ENCODE measurements at regions of chr1 and their contacts with region 1.

Region 1: DNA sequence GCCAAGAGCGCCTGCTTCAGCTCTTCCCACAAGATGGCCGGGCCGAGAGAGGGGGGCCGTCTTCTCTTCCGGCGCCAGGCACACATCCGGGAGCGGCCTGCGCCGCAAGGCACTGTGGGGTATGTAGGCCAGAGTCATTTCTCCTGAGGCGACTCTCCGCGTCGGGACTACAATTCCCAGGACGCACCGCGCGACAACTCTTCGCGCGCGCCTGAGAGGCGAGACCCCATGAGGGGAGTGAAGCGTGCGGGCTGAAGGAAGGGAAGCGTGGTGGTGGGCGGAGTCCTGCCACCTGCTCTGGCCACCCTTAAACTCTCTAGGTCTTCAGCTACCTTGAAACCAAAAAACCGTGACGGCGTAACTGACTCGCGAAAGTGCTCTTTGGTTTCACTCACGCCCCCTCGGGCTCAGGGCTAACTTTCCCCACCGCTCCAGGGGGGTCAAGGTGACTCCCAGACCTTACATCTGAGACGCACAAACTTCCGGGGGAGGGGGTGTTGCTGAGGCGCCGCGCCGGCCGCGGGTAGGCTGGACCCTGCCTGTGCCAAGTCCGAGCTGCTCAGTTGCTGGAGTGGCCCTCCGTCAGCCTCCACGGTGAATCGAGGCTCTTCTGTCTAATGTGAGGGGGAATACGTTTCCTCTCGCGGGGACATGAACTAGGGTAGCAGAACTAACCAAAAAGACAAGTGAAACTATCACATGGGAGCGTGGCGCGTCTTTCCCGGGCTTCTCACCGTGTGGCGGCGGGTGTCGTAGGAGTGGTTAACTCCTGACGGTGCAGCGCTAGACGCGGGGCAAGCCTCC is at the start of gene SERBP1:
- DNase-seq: peak; percentile 98
- H3K4me3 Mint-ChIP-seq: peak within 1 kb of the TSS; percentile 100
- H3K27ac Mint-ChIP-seq: peak within 1 kb of the TSS; percentile 98
- H3K4me1 Mint-ChIP-seq: peaks cover 28% of the 10 kb centered on the region
- H3K27me3 Mint-ChIP-seq: no peaks in the 10 kb centered on the region
- CTCF ChIP-seq: no peak
- total RNA-seq, gene SERBP1: 233 and 315 TPM in 2 replicates

Region 2: GRCh38 chr1:67367370-67368045 is 63.0 kb before region 1 on chr1:
- CTCF ChIA-PET with region 1: interaction called, 3 read pairs
- POLR2A ChIA-PET with region 1: interaction called, 12 read pairs
- intact Hi-C with region 1: no loop called
- DNase-seq: peak; percentile 64
- H3K4me3 Mint-ChIP-seq: no peak overlapping the region
- H3K27ac Mint-ChIP-seq: no peak overlapping the region
- H3K4me1 Mint-ChIP-seq: peaks cover 16% of the 10 kb centered on the region
- H3K27me3 Mint-ChIP-seq: no peaks in the 10 kb centered on the region
- CTCF ChIP-seq: no peak

Region 3: DNA sequence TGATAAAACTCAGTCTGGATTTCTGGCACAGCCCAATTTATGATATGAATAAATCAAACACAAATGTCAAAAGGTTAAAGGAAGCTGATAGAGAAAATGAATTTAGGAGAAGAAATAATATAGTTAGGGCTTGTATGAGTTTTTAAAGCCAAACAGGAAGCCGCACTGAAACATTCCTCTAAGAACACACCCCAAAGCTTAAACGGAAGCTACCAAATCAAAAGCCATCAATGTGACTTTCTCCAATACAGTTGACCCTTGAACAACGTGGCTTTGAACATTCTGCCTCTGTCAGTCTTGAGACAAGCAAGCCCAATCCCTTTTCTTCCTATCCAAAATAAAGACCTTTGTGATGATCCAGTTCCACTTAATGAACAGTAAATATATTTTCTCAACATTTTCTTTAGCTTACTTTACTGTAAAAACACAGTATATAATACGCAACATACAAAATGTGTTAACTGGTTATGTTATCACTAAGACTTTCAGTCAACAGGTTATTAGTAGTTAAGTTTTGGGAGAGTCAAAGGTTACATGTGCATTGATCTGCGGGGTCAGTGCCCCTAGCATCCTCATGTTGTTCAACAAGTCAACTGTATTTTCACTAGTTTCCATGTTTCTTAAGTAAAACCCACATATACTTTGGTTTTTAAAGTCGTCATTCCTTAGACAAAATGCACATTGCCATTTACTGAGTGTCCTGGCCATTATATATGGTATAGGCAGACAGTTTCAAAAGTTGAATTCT is 11.5 kb before region 1 on chr1:
- CTCF ChIA-PET with region 1: interaction called, 8 read pairs
- POLR2A ChIA-PET with region 1: interaction called, 25 read pairs
- intact Hi-C with region 1: no loop called
- DNase-seq: no peak
- H3K4me3 Mint-ChIP-seq: no peak overlapping the region
- H3K27ac Mint-ChIP-seq: no peak overlapping the region
- H3K4me1 Mint-ChIP-seq: peaks cover 13% of the 10 kb centered on the region
- H3K27me3 Mint-ChIP-seq: no peaks in the 10 kb centered on the region
- CTCF ChIP-seq: no peak

Region 4: GRCh38 chr1:67535474-67535873 is 104.9 kb after region 1 on chr1:
- CTCF ChIA-PET with region 1: no interaction called
- POLR2A ChIA-PET with region 1: no interaction called
- intact Hi-C with region 1: no loop called
- DNase-seq: peak; percentile 85
- H3K4me3 Mint-ChIP-seq: no peak overlapping the region
- H3K27ac Mint-ChIP-seq: peak overlapping the region; percentile 12
- H3K4me1 Mint-ChIP-seq: peaks cover 6% of the 10 kb centered on the region
- H3K27me3 Mint-ChIP-seq: no peaks in the 10 kb centered on the region
- CTCF ChIP-seq: peak; percentile 95

Region 5: GRCh38 chr1:68051475-68051874 is 620.9 kb after region 1 on chr1:
- CTCF ChIA-PET with region 1: no interaction called
- POLR2A ChIA-PET with region 1: no interaction called
- intact Hi-C with region 1: no loop called
- DNase-seq: no peak
- H3K4me3 Mint-ChIP-seq: no peak overlapping the region
- H3K27ac Mint-ChIP-seq: no peak overlapping the region
- H3K4me1 Mint-ChIP-seq: no peaks in the 10 kb centered on the region
- H3K27me3 Mint-ChIP-seq: no peaks in the 10 kb centered on the region
- CTCF ChIP-seq: no peak